CD4-positive, alpha-beta memory T cell (primary cell): ENCODE measurements at regions of chr10 and their contacts with region 1.

Region 1: DNA sequence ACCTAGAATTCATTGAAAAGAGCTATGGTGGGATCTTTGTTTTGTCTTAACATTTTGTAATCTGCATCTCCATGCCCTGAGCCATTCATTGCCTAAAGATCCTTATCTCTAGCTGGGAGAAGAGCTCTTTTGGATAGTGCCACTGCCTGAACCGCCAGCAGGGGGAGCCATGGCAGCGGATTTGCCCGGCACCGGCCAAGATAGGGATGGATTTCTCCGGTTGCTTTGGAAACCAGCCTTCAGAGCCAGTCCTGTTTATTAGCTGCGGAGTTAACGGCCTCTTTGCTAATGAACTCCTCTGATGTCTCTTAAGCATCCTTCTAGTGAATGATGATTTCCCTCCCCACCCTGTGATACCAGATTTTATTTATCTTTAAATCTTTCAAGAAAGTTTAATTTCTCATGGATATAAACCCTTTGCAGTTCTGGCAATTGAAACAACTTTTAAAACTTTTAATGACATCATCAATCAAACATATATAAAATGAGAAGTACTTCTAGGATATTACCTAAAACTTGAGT is 58.2 kb upstream of the LYZL2 start:
- DNase-seq: peak; percentile 59 to 76 (median 66)
- H3K4me3 ChIP-seq: no peak overlapping the region
- H3K4me3 Mint-ChIP-seq: no peak overlapping the region
- H3K27ac ChIP-seq: no peak overlapping the region
- H3K27ac Mint-ChIP-seq: peak overlapping the region in 1 of 7 donors; percentile 29
- H3K4me1 ChIP-seq: no peaks in the 10 kb centered on the region
- H3K4me1 Mint-ChIP-seq: peaks cover 0 to 3% (median 0%) of the 10 kb centered on the region in 4 donors
- H3K27me3 ChIP-seq: no peaks in the 10 kb centered on the region
- H3K27me3 Mint-ChIP-seq: peaks cover 9 to 29% of the 10 kb centered on the region in 2 donors

Region 2: GRCh38 chr10:30671026-30671616 is 16.6 kb before region 1 on chr10:
- CTCF ChIA-PET with region 1: interaction called, 37 read pairs
- POLR2A ChIA-PET with region 1: no interaction called
- intact Hi-C with region 1: loop called (anchors 2 kb)
- DNase-seq: peak in 4 of 5 donors; percentile 39 to 47 (median 46)
- H3K4me3 ChIP-seq: no peak overlapping the region
- H3K4me3 Mint-ChIP-seq: peak overlapping the region; percentile 15 to 77 (median 68)
- H3K27ac ChIP-seq: no peak overlapping the region
- H3K27ac Mint-ChIP-seq: no peak overlapping the region
- H3K4me1 ChIP-seq: no peaks in the 10 kb centered on the region
- H3K4me1 Mint-ChIP-seq: peaks cover 0 to 7% (median 2%) of the 10 kb centered on the region in 4 donors
- H3K27me3 ChIP-seq: peaks cover 6% of the 10 kb centered on the region
- H3K27me3 Mint-ChIP-seq: peaks cover 2 to 8% of the 10 kb centered on the region in 2 donors

Region 3: DNA sequence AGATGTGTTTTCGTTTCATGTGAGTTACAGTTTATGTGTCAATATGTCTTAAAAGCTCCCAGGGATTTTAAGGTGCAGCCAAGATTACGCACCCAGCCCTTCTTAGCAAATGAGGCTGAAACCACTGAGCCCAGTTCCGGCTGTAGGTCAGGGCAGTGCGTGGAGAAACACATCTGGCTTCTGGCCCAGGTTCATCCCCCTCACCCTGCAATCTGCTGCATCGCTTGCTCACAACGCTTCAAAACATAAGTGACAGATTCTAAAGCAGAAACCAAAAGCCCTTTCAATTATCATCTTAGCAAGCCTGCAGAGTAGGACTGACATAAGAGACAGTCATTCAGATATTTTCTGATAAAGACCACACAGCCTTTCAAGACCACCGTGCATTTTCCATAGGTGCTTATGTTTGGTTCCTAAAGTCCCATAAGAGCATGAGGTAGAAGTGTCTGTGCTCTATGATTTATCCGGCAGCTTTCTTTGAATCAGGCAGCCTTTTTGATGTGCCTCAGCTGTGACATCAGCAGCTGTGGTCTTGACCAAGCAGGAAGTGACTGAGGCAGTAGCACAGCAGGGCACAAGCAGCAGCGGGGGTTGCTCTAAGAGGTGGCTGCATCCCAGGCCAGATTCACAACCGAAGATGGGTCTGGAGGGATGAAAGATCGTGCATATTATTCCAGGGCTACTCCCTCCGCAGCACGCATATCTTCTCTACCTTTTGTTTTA is 13.9 kb after region 1 on chr10:
- CTCF ChIA-PET with region 1: interaction called, 67 read pairs
- POLR2A ChIA-PET with region 1: interaction called, 15 read pairs
- intact Hi-C with region 1: no loop called
- DNase-seq: peak; percentile 75 to 88 (median 78)
- H3K4me3 ChIP-seq: peak overlapping the region in 1 of 2 donors; percentile 28
- H3K4me3 Mint-ChIP-seq: peak overlapping the region; percentile 78 to 88 (median 84)
- H3K27ac ChIP-seq: peak overlapping the region; percentile 59
- H3K27ac Mint-ChIP-seq: peak overlapping the region; percentile 90 to 98 (median 95)
- H3K4me1 ChIP-seq: peaks cover 89% of the 10 kb centered on the region
- H3K4me1 Mint-ChIP-seq: peaks cover 53 to 90% (median 77%) of the 10 kb centered on the region in 4 donors
- H3K27me3 ChIP-seq: no peaks in the 10 kb centered on the region
- H3K27me3 Mint-ChIP-seq: no peaks in the 10 kb centered on the region

Region 4: GRCh38 chr10:30731963-30732362 is 44.2 kb after region 1 on chr10:
- CTCF ChIA-PET with region 1: interaction called, 10 read pairs
- POLR2A ChIA-PET with region 1: no interaction called
- intact Hi-C with region 1: no loop called
- DNase-seq: no peak
- H3K4me3 ChIP-seq: no peak overlapping the region
- H3K4me3 Mint-ChIP-seq: no peak overlapping the region
- H3K27ac ChIP-seq: no peak overlapping the region
- H3K27ac Mint-ChIP-seq: no peak overlapping the region
- H3K4me1 ChIP-seq: no peaks in the 10 kb centered on the region
- H3K4me1 Mint-ChIP-seq: no peaks in the 10 kb centered on the region
- H3K27me3 ChIP-seq: no peaks in the 10 kb centered on the region
- H3K27me3 Mint-ChIP-seq: peaks cover 2 to 6% of the 10 kb centered on the region in 2 donors

Region 5: GRCh38 chr10:30751678-30752331 is 64.0 kb after region 1 on chr10:
- CTCF ChIA-PET with region 1: interaction called, 11 read pairs
- POLR2A ChIA-PET with region 1: interaction called, 3 read pairs
- intact Hi-C with region 1: no loop called
- DNase-seq: peak; percentile 49 to 72 (median 61)
- H3K4me3 ChIP-seq: no peak overlapping the region
- H3K4me3 Mint-ChIP-seq: peak overlapping the region in 6 of 8 donors; percentile 7 to 69 (median 22)
- H3K27ac ChIP-seq: no peak overlapping the region
- H3K27ac Mint-ChIP-seq: peak overlapping the region in 3 of 7 donors; percentile 62 to 82 (median 64)
- H3K4me1 ChIP-seq: peaks cover 4% of the 10 kb centered on the region
- H3K4me1 Mint-ChIP-seq: peaks cover 6 to 30% (median 22%) of the 10 kb centered on the region in 4 donors
- H3K27me3 ChIP-seq: no peaks in the 10 kb centered on the region
- H3K27me3 Mint-ChIP-seq: peaks cover 0 to 3% of the 10 kb centered on the region in 2 donors

Region 6: DNA sequence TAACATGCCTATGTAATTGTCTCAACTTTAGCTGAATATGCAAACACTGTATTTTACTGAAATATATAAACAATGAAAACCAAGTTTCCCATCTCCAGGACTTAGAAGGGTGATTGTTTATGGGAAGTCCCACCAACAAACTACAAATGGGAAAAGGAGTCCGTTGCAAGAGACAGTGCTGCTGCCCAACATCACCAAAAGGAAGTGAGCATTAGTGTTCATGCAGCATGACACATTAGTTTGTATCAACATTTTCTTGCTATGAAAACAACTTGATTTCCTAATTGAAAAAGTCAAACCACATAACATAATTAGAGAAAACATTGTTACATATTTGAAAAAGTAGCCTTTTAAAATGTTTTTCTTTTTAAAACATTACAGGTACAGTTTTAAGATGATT is 205.4 kb after region 1 on chr10:
- CTCF ChIA-PET with region 1: no interaction called
- POLR2A ChIA-PET with region 1: no interaction called
- intact Hi-C with region 1: no loop called
- DNase-seq: no peak
- H3K4me3 ChIP-seq: no peak overlapping the region
- H3K4me3 Mint-ChIP-seq: no peak overlapping the region
- H3K27ac ChIP-seq: no peak overlapping the region
- H3K27ac Mint-ChIP-seq: no peak overlapping the region
- H3K4me1 ChIP-seq: no peaks in the 10 kb centered on the region
- H3K4me1 Mint-ChIP-seq: no peaks in the 10 kb centered on the region
- H3K27me3 ChIP-seq: no peaks in the 10 kb centered on the region
- H3K27me3 Mint-ChIP-seq: no peaks in the 10 kb centered on the region

Region 7: DNA sequence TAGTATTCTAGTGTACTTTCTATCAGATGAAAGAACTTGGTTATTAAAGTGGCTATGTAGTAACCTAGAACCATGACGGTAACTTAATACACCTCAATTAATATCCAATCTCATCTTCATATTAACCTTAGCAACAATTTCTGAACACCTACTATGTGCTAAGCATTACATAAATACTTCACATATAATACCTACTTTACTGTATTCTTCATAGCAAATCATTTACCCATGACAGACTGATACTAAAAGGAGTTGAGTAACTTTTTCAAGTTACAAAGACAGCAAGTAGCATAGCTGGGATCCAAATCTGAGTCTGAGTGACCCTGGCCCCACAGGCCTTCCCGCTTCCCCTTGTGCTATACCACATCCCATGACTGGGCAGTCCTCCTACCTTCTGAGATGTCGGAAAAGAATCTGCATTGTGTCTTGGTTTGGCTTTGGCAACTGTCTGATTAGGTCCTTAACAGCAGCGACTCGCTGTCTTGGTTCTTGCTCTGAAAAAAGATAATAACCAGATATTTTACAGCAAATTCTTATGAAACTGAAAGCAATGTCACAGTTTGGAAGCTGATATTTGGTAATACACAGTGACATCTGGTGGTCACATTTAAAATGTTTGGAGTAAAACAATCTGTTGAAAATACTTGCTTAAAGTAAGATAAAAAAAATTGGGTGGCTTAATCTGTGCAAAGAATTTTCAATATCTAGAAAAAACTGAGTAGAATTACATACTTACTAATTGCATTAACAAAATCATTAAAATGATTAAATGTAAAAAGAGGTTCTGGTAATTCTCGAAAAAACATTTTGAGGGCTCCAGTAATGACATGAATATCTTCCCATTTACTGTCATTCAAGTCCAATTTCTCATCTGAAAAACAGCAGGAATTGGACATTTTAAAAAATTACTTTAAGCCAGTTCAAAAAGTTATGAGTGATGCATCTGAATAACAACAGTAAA is 1120.8 kb after region 1 on chr10:
- CTCF ChIA-PET with region 1: interaction called, 12 read pairs
- POLR2A ChIA-PET with region 1: no interaction called
- intact Hi-C with region 1: no loop called
- DNase-seq: peak in 4 of 5 donors; percentile 44 to 50 (median 48)
- H3K4me3 ChIP-seq: no peak overlapping the region
- H3K4me3 Mint-ChIP-seq: peak overlapping the region in 4 of 8 donors; percentile 26 to 71 (median 56)
- H3K27ac ChIP-seq: no peak overlapping the region
- H3K27ac Mint-ChIP-seq: peak overlapping the region in 5 of 7 donors; percentile 71 to 94 (median 88)
- H3K4me1 ChIP-seq: peaks cover 4% of the 10 kb centered on the region
- H3K4me1 Mint-ChIP-seq: peaks cover 3 to 7% (median 4%) of the 10 kb centered on the region in 4 donors
- H3K27me3 ChIP-seq: no peaks in the 10 kb centered on the region
- H3K27me3 Mint-ChIP-seq: no peaks in the 10 kb centered on the region